Mammary epithelial cell (primary cell): ENCODE measurements at regions of chr10 and their contacts with region 1.

Region 1: DNA sequence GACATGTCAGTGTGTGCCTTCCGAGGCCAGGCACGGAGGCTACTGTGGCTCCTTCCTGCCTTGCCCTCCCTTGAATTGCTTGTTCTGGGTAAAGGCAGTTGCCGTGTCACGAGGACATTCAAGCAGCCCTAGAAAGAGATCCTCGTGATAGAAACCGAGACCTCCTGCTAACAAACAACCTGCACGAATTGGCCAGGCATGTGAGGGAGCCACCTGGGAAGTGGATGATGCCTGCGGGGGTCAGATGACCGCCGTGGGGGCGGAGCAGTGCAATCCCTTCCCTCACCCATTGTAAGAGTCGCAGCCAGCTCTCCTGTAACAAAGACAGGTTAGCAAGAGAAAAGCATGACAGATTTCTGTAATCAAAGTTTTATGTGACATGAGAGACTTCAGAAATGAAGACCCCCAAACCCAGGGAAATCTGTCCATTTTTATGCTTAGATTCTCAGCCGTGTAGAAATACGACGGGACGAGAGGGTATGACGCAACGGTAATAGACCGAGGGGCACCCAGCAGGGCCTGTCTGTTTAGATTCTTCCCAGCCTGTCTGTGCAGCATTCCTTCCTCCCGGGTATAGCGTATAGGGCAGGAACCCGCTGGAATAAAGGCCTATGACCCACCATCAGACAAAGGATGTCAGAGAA is 241.7 kb downstream of the GATA3 start:
- DNase-seq: no peak
- H3K4me3 ChIP-seq: no peak overlapping the region
- H3K27ac ChIP-seq: no peak overlapping the region
- H3K4me1 ChIP-seq: peaks cover 6% of the 10 kb centered on the region
- H3K27me3 ChIP-seq: no peaks in the 10 kb centered on the region
- CTCF ChIP-seq: no peak

Region 2: GRCh38 chr10:8229153-8229552 is 67.1 kb before region 1 on chr10:
- CTCF ChIA-PET with region 1: no interaction called
- dilution Hi-C with region 1: no loop called
- in situ Hi-C with region 1: no loop called
- intact Hi-C with region 1: no loop called
- DNase-seq: no peak
- H3K4me3 ChIP-seq: no peak overlapping the region
- H3K27ac ChIP-seq: no peak overlapping the region
- H3K4me1 ChIP-seq: peaks cover 5% of the 10 kb centered on the region
- H3K27me3 ChIP-seq: no peaks in the 10 kb centered on the region
- CTCF ChIP-seq: no peak

Region 3: GRCh38 chr10:8312781-8313180 is 16.6 kb after region 1 on chr10:
- CTCF ChIA-PET with region 1: no interaction called
- dilution Hi-C with region 1: no loop called
- in situ Hi-C with region 1: no loop called
- intact Hi-C with region 1: no loop called
- DNase-seq: peak; percentile 23
- H3K4me3 ChIP-seq: no peak overlapping the region
- H3K27ac ChIP-seq: no peak overlapping the region
- H3K4me1 ChIP-seq: no peaks in the 10 kb centered on the region
- H3K27me3 ChIP-seq: no peaks in the 10 kb centered on the region
- CTCF ChIP-seq: no peak

Region 4: GRCh38 chr10:8350351-8350967 is 54.2 kb after region 1 on chr10:
- CTCF ChIA-PET with region 1: no interaction called
- dilution Hi-C with region 1: no loop called
- in situ Hi-C with region 1: no loop called
- intact Hi-C with region 1: loop called (anchors 10 kb)
- DNase-seq: peak; percentile 30
- H3K4me3 ChIP-seq: no peak overlapping the region
- H3K27ac ChIP-seq: no peak overlapping the region
- H3K4me1 ChIP-seq: no peaks in the 10 kb centered on the region
- H3K27me3 ChIP-seq: no peaks in the 10 kb centered on the region
- CTCF ChIP-seq: no peak